B cell (primary cell): ENCODE measurements at regions of chr2 and their contacts with region 1.

Region 1: GRCh38 chr2:10043906-10044601 is 704 bp downstream of the KLF11 start:
- DNase-seq: peak; percentile 97
- ATAC-seq: peak; percentile 61
- H3K4me3 ChIP-seq: peak overlapping the region in 4 of 5 experiments; percentile 40 to 68 (median 58)
- H3K4me3 Mint-ChIP-seq: peak overlapping the region; percentile 87
- H3K27ac ChIP-seq: peak overlapping the region; percentile 58 to 84
- H3K27ac Mint-ChIP-seq: peak overlapping the region; percentile 82
- H3K4me1 ChIP-seq: peaks cover 12 to 20% of the 10 kb centered on the region in 2 donors
- H3K4me1 Mint-ChIP-seq: peaks cover 26% of the 10 kb centered on the region
- H3K27me3 ChIP-seq: no peaks in the 10 kb centered on the region
- H3K27me3 Mint-ChIP-seq: no peaks in the 10 kb centered on the region
- CTCF ChIP-seq: no peak

Region 2: GRCh38 chr2:9555297-9556141 is 488.5 kb before region 1 on chr2 and contains the start of gene ADAM17:
- CTCF ChIA-PET with region 1: no interaction called
- POLR2A ChIA-PET with region 1: no interaction called
- intact Hi-C with region 1: loop called (anchors 5 kb)
- DNase-seq: peak; percentile 94
- ATAC-seq: peak; percentile 91
- H3K4me3 ChIP-seq: peak within 1 kb of the TSS; percentile 74 to 99 (median 98)
- H3K4me3 Mint-ChIP-seq: peak within 1 kb of the TSS; percentile 98
- H3K27ac ChIP-seq: peak within 1 kb of the TSS; percentile 92 to 93
- H3K27ac Mint-ChIP-seq: peak within 1 kb of the TSS; percentile 99
- H3K4me1 ChIP-seq: peaks cover 41 to 44% of the 10 kb centered on the region in 2 donors
- H3K4me1 Mint-ChIP-seq: peaks cover 47% of the 10 kb centered on the region
- H3K27me3 ChIP-seq: no peaks in the 10 kb centered on the region
- H3K27me3 Mint-ChIP-seq: no peaks in the 10 kb centered on the region
- CTCF ChIP-seq: peak; percentile 33
- total RNA-seq, gene ADAM17: 57.8 and 60.5 TPM in 2 replicates

Region 3: GRCh38 chr2:9813312-9814133 is 230.5 kb before region 1 on chr2:
- CTCF ChIA-PET with region 1: interaction called, 118 read pairs
- POLR2A ChIA-PET with region 1: interaction called, 3 read pairs
- intact Hi-C with region 1: loop called (anchors 1 kb)
- DNase-seq: peak; percentile 77
- ATAC-seq: peak; percentile 65
- H3K4me3 ChIP-seq: no peak overlapping the region
- H3K4me3 Mint-ChIP-seq: no peak overlapping the region
- H3K27ac ChIP-seq: no peak overlapping the region
- H3K27ac Mint-ChIP-seq: no peak overlapping the region
- H3K4me1 ChIP-seq: peaks cover 6 to 10% of the 10 kb centered on the region in 2 donors
- H3K4me1 Mint-ChIP-seq: peaks cover 7% of the 10 kb centered on the region
- H3K27me3 ChIP-seq: peaks cover 0 to 10% (median 5%) of the 10 kb centered on the region in 4 experiments
- H3K27me3 Mint-ChIP-seq: peaks cover 13% of the 10 kb centered on the region
- CTCF ChIP-seq: peak; percentile 96

Region 4: GRCh38 chr2:9975805-9976447 is 68.1 kb before region 1 on chr2:
- CTCF ChIA-PET with region 1: interaction called, 319 read pairs
- POLR2A ChIA-PET with region 1: no interaction called
- intact Hi-C with region 1: no loop called
- DNase-seq: no peak
- ATAC-seq: no peak
- H3K4me3 ChIP-seq: no peak overlapping the region
- H3K4me3 Mint-ChIP-seq: no peak overlapping the region
- H3K27ac ChIP-seq: no peak overlapping the region
- H3K27ac Mint-ChIP-seq: no peak overlapping the region
- H3K4me1 ChIP-seq: no peaks in the 10 kb centered on the region
- H3K4me1 Mint-ChIP-seq: no peaks in the 10 kb centered on the region
- H3K27me3 ChIP-seq: peaks cover 0 to 9% (median 2%) of the 10 kb centered on the region in 4 experiments
- H3K27me3 Mint-ChIP-seq: peaks cover 28% of the 10 kb centered on the region
- CTCF ChIP-seq: no peak

Region 5: DNA sequence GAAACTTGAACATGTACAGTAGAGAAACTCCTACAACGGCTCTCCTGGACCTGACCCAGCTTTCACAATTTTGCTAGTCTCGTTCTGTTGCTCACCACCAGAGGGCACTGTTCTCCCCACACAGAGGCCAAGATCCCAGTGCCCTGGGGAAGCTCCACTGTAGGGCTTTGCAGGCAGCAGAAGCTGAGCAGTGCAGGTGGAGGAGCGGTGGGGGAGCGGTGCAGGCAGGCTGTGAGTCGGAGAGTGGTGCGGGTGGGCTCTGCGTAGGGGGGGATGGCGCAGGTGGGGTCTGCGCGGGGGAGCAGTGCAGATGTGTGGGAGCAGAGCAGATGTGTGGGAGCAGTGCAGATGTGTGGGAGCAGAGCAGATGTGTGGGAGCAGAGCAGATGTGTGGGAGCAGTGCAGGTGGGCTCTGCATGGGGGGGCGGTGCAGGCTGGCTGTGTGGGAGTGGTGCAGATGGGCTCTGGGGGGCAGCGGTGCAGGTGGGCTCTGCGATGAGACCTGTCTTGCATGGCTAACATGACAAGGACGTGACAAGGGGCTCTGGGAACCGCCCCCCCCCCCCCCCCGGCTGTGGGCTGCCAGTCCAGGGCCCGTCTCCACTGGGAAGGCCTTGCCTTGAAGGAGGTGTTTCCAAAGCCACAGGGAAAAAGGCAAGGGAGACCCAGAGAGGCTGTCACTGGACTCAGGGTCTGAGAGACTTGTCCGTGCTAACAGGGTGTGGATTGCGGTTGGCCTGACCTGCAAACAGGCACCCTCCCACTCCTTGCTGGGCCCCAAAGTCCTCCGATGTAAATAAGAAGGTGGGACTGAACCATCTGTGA is 28.8 kb after region 1 on chr2:
- CTCF ChIA-PET with region 1: interaction called, 16 read pairs
- POLR2A ChIA-PET with region 1: no interaction called
- intact Hi-C with region 1: no loop called
- DNase-seq: peak; percentile 86
- ATAC-seq: peak; percentile 95
- H3K4me3 ChIP-seq: no peak overlapping the region
- H3K4me3 Mint-ChIP-seq: no peak overlapping the region
- H3K27ac ChIP-seq: no peak overlapping the region
- H3K27ac Mint-ChIP-seq: no peak overlapping the region
- H3K4me1 ChIP-seq: peaks cover 3 to 6% of the 10 kb centered on the region in 2 donors
- H3K4me1 Mint-ChIP-seq: peaks cover 4% of the 10 kb centered on the region
- H3K27me3 ChIP-seq: peaks cover 0 to 36% (median 22%) of the 10 kb centered on the region in 4 experiments
- H3K27me3 Mint-ChIP-seq: peaks cover 43% of the 10 kb centered on the region
- CTCF ChIP-seq: peak; percentile 81

Region 6: DNA sequence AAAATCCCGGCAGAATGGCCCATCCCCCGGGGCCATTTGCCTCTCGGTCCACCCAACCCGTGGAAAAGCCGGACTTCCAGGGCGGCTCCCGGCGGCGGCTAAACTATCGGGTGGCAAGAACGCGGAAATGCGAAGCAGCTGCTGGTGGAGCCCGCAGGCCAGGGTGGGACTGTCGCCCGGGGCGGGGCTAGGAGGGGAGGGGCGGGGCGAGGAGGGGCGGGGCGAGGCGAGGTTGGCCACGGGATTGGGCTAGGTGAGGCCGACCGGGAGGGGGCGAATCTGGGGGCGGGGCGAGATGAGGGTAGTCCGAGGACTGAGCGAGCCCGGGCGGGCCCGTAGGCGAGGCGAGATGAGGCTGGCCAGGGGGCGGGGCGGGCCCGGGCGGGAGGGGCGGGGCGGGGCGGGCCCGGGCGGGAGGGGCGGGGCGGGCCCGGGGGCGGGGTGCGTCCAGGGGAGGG is 1110.9 kb after region 1 on chr2:
- CTCF ChIA-PET with region 1: no interaction called
- POLR2A ChIA-PET with region 1: no interaction called
- intact Hi-C with region 1: loop called (anchors 10 kb)
- DNase-seq: peak; percentile 96
- ATAC-seq: peak; percentile 89
- H3K4me3 ChIP-seq: peak overlapping the region; percentile 30 to 87 (median 81)
- H3K4me3 Mint-ChIP-seq: peak overlapping the region; percentile 88
- H3K27ac ChIP-seq: peak overlapping the region; percentile 89 to 93
- H3K27ac Mint-ChIP-seq: peak overlapping the region; percentile 93
- H3K4me1 ChIP-seq: peaks cover 15 to 20% of the 10 kb centered on the region in 2 donors
- H3K4me1 Mint-ChIP-seq: peaks cover 18% of the 10 kb centered on the region
- H3K27me3 ChIP-seq: peaks cover 0 to 5% (median 0%) of the 10 kb centered on the region in 4 experiments
- H3K27me3 Mint-ChIP-seq: no peaks in the 10 kb centered on the region
- CTCF ChIP-seq: no peak